ENCODE measurements at regions of chr5 and their contacts with region 1.

Region 1: DNA sequence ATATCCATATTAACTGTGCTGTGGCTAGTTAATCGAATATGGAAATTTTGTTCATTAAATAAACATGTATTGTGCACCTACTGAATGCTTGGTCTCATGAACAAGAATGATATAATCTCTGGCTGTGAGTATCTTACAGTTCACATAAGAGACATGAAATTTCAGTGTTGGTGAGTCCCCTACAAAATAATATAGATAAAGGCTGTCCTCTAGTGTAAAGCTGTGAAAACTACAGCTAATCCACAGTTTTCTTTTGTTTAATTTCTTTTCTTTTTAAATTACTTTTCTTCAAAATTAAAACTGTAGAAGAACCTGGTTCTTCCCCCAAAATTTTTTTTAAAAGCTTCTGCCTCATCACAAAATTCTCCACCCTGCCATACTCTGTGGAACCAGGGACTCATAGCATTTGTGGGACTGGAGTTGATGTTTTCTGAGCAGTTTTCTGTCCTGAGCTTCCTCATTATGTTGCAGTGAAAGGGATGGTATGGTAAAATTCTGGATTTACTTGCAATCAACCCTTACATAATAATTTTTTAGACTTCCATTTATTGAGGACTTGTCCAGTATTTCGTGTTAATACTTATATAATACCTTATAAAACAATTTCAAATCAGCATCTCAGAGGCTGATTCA is 135.0 kb downstream of the STK32A start:
- DNase-seq: peak; percentile 47
- H3K4me3 ChIP-seq: no peak overlapping the region
- H3K27ac ChIP-seq: no peak overlapping the region
- H3K4me1 ChIP-seq: peaks cover 8% of the 10 kb centered on the region
- H3K27me3 ChIP-seq: peaks cover 2 to 11% of the 10 kb centered on the region in 2 experiments
- CTCF ChIP-seq: peak; percentile 41 to 42
- POLR2A ChIP-seq: no peak

Region 2: DNA sequence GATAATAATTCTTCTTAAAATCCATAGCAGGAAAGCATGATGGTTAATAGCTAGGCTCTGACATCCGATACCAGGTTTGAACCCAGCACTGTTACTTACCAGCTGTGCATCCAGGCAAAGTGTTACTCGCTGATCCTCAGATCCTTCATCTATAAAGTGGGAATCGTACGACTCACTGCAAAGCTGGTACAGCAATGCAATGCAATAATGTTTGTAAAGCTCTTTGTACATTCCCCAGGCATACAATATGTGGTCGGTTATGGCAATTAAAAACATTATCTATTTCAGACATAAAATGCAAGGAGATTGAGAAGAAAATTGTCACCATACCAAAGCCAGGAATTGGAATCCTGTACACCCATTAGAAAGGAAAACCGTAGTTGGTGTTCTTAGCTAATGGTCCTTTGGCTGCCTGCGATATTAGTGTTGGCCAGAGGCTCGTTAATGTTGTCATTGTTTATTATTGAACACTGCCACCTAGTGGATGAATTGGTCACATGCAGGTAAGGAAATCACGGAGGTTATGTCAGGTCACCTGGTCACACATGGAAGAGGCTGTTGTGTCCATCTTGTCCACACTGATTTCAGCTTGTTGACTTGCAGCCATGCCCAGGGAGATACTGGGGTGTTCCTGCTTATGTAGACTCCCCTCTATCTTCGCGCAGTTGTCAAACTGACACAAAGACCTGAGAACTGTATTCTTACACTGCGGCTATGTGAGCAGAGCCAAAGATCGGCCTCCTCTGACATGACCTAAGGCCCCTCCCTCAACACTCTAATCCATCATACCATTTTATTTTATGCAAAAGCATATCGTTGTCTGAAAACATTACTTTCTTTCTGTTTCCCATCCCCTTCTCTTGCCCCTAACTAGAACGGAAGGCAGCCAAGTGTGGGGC is 403.8 kb before region 1 on chr5:
- CTCF ChIA-PET with region 1: interaction called, 15 read pairs
- POLR2A ChIA-PET with region 1: no interaction called
- dilution Hi-C with region 1: no loop called
- intact Hi-C with region 1: loop called (anchors 10 kb)
- DNase-seq: peak; percentile 74
- H3K4me3 ChIP-seq: no peak overlapping the region
- H3K27ac ChIP-seq: no peak overlapping the region
- H3K4me1 ChIP-seq: no peaks in the 10 kb centered on the region
- H3K27me3 ChIP-seq: no peaks in the 10 kb centered on the region
- CTCF ChIP-seq: peak; percentile 62 to 71
- POLR2A ChIP-seq: no peak

Region 3: DNA sequence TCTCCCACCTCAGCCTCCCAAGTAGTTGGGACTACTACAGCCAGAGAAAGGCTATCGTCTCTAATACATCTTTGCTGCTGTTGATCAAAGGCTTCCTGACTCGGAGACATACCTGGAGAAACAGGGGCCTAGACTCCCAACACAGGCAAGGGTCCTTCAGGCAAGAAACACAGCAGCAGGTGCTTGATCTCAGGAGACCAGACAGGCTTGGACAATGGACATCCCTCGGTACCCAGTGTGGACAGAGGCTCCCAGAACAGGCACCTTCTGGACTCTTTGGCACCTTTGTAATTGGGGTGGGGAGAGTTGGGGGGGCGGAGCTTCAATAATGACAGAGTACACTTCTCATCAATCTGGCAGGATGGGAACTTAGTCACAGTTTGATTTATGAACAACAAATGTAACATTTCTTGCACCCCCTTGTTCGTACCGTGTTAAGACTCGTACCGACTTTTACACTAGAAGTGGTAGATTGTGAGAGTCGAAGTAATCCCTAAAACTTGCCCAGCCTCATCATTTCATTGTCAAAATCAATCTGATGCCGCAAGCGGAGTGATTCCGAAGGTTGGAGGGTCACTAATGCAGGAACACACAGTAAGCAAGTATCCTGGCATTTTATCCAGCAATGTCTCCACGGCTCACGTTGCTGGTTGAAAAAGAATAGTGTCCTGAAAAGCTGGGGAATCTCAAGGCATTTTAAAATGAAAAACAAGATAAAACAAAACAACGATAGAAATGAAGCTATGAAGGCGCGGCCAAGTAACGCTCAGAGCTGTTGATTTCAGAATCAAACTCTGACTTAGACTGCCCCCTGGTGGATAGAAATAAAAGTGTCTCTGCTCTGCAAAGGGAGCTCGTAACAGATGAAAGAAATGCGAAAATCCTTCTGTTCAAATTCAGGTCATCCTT is 181.4 kb before region 1 on chr5:
- CTCF ChIA-PET with region 1: interaction called, 142 read pairs
- POLR2A ChIA-PET with region 1: no interaction called
- dilution Hi-C with region 1: no loop called
- intact Hi-C with region 1: loop called (anchors 1 kb)
- DNase-seq: peak; percentile 46
- H3K4me3 ChIP-seq: no peak overlapping the region
- H3K27ac ChIP-seq: no peak overlapping the region
- H3K4me1 ChIP-seq: no peaks in the 10 kb centered on the region
- H3K27me3 ChIP-seq: peaks cover 0 to 8% of the 10 kb centered on the region in 2 experiments
- CTCF ChIP-seq: peak; percentile 60 to 70
- POLR2A ChIP-seq: no peak

Region 4: DNA sequence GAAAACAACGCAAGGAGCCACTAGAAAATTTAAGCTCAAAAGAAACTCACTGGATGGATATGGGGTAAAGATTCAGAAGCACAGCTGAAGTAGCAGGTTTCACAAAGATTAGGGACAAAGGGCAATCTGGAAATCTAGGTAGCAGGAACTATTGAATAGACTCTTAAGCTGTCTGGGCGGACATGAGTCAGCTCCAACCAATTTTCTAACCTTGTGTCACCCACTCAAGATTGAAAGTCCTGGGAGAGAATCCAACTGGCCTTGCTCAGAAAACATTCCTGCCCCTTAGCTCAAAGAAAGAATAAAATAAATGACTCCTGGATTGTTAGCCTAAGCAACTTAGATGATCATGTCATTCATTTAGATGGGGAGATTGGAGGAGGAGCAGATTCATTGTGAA is 65.9 kb before region 1 on chr5:
- CTCF ChIA-PET with region 1: interaction called, 12 read pairs
- POLR2A ChIA-PET with region 1: no interaction called
- dilution Hi-C with region 1: no loop called
- intact Hi-C with region 1: no loop called
- DNase-seq: peak; percentile 83
- H3K4me3 ChIP-seq: no peak overlapping the region
- H3K27ac ChIP-seq: peak overlapping the region; percentile 81
- H3K4me1 ChIP-seq: peaks cover 19% of the 10 kb centered on the region
- H3K27me3 ChIP-seq: no peaks in the 10 kb centered on the region
- CTCF ChIP-seq: no peak
- POLR2A ChIP-seq: peak; percentile 25

Region 5: DNA sequence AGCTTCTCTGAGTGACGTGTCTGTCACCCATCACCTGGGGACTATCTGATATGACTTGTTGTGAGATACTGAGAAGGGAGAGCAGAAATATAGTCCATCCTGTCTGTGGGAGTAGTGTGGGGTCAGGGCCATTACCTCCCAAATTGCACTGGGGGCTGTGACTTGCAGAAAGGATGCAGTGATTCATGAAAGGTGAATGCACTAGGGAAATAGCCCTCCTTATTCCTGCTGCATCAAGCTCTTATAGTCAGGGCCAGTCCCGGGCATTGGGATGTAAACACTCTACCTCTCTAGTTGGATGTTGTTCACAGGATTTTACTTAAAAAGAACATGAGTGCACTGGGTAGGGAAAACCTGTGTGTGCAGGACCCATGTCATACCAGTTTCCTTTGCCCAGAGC is 10.3 kb before region 1 on chr5:
- CTCF ChIA-PET with region 1: interaction called, 20 read pairs
- POLR2A ChIA-PET with region 1: no interaction called
- dilution Hi-C with region 1: no loop called
- intact Hi-C with region 1: no loop called
- DNase-seq: no peak
- H3K4me3 ChIP-seq: no peak overlapping the region
- H3K27ac ChIP-seq: no peak overlapping the region
- H3K4me1 ChIP-seq: no peaks in the 10 kb centered on the region
- H3K27me3 ChIP-seq: peaks cover 0 to 11% of the 10 kb centered on the region in 2 experiments
- CTCF ChIP-seq: no peak
- POLR2A ChIP-seq: no peak

Region 6: GRCh38 chr5:147558826-147559225 is 189.0 kb after region 1 on chr5:
- CTCF ChIA-PET with region 1: interaction called, 10 read pairs
- POLR2A ChIA-PET with region 1: no interaction called
- dilution Hi-C with region 1: no loop called
- intact Hi-C with region 1: loop called (anchors 1 kb)
- DNase-seq: peak; percentile 86
- H3K4me3 ChIP-seq: no peak overlapping the region
- H3K27ac ChIP-seq: no peak overlapping the region
- H3K4me1 ChIP-seq: peaks cover 3% of the 10 kb centered on the region
- H3K27me3 ChIP-seq: peaks cover 0 to 1% of the 10 kb centered on the region in 2 experiments
- CTCF ChIP-seq: peak; percentile 74 to 85
- POLR2A ChIP-seq: no peak